ENCODE measurements at regions of chr17 and their contacts with region 1.

Region 1: GRCh38 chr17:4973256-4974114 is 5.9 kb upstream of the SPAG7 start:
- DNase-seq: no peak
- ATAC-seq: no peak
- H3K4me3 ChIP-seq: no peak overlapping the region
- H3K27ac ChIP-seq: no peak overlapping the region
- H3K4me1 ChIP-seq: peaks cover 11% of the 10 kb centered on the region
- H3K27me3 ChIP-seq: no peaks in the 10 kb centered on the region
- CTCF ChIP-seq: no peak

Region 2: DNA sequence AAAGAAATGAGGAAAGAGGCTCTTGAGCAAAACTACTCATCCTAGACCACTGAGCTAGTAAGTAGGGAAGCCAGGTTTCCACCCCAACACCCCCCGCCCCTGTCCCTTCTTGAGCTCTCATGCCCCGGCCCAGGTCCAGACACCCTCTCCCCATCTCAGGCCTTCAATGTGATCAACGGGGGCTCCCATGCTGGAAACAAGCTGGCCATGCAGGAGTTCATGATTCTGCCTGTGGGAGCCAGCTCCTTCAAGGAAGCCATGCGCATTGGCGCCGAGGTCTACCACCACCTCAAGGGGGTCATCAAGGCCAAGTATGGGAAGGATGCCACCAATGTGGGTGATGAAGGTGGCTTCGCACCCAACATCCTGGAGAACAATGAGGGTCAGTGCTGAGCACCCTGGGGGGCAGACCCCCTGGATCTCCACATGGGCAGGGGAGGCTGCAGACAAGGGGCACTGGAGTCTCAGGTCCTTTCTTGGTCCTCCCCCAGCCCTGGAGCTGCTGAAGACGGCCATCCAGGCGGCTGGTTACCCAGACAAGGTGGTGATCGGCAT is 18.5 kb before region 1 on chr17:
- CTCF ChIA-PET with region 1: no interaction called
- POLR2A ChIA-PET with region 1: interaction called, 16 read pairs
- in situ Hi-C with region 1: no loop called
- intact Hi-C with region 1: no loop called
- DNase-seq: no peak
- ATAC-seq: no peak
- H3K4me3 ChIP-seq: no peak overlapping the region
- H3K27ac ChIP-seq: no peak overlapping the region
- H3K4me1 ChIP-seq: peaks cover 16% of the 10 kb centered on the region
- H3K27me3 ChIP-seq: no peaks in the 10 kb centered on the region
- CTCF ChIP-seq: no peak